HCT116 (cell line): ENCODE measurements at regions of chr4 and their contacts with region 1.

Region 1: DNA sequence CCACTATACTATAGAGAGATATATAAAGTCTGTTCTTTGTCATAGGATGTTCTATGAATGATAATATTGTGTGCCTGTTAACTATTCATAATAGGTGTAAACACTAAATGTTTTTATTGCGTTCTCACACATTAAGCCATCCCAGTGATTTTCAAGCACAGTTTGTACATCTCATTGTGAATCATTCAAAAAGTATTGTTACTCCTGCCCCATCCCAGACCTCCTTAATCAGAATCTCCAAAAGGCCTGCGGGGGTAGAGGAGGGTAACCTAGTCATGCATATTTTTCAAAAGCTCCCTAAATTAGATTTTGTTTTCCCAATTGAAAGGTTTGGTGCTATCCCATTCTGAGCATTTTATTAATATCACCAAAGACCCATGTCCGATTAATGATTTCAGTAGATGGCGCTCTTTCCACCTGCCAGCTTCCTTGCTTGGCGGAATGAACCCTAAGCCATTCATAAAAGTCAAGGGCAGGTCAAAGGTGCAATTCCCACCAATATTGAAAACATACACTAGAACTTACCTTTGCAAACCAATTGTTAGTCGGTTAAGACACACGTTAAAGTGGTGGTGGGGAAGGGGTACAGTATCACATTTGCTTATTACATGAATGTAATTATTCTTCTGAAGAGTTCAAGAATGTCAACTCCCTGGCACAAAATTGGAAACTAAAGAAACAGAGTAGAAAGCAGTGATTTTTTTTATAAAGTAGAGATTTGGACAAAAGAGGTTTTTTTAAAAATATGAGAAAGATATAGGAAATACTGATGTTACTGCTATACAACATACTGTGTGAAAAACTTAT is 5.8 kb upstream of the TET2 start:
- DNase-seq: no peak
- ATAC-seq: peak; percentile 75; the same call in 1 of the 2 replicates
- H3K4me3 ChIP-seq: no peak overlapping the region
- H3K27ac ChIP-seq: no peak overlapping the region
- H3K4me1 ChIP-seq: peaks cover 6 to 11% of the 10 kb centered on the region in 2 experiments; a peak in 3 of 4 replicates
- H3K27me3 ChIP-seq: no peaks in the 10 kb centered on the region
- CTCF ChIP-seq: peak; percentile 63 to 79 (median 67); a peak in 5 of 6 replicates
- POLR2A ChIP-seq: no peak
- RAD21 ChIP-seq: peak; percentile 81

Region 2: DNA sequence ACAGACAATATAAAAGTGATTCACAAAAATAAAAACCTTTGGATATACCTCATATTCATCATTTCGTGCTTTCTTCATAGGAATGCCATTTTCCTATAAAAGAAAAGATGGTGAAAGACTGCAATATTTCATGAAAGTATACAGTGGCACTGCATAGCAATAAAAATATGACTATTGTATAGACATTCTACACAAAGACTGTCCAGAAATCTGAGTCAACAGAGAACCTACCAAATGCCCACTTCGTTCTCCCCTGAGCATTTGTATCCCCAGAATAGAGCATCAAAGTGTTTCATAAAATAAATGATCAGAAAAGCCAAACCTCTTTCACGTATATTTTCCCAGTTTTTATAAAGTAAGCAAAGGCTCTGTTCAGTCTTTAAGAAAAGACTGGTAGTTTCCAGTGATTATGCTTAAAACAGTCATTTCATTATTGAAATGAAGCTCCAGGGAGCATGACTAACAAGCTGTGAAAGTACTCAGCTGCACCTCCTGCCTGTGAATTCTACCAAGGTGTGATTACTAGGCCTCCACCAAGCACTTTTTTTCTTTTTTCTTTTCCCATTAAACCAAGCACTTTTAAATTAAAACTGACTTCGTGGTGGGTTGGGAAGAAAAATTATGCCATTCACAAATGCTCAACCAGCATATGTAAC is 312.8 kb after region 1 on chr4:
- CTCF ChIA-PET with region 1: no interaction called
- POLR2A ChIA-PET with region 1: no interaction called
- RAD21 ChIA-PET with region 1: no interaction called
- intact Hi-C with region 1: loop called (anchors 5 kb)
- DNase-seq: no peak
- ATAC-seq: no peak
- H3K4me3 ChIP-seq: no peak overlapping the region
- H3K27ac ChIP-seq: no peak overlapping the region
- H3K4me1 ChIP-seq: no peaks in the 10 kb centered on the region
- H3K27me3 ChIP-seq: no peaks in the 10 kb centered on the region
- CTCF ChIP-seq: no peak
- POLR2A ChIP-seq: no peak
- RAD21 ChIP-seq: no peak

Region 3: DNA sequence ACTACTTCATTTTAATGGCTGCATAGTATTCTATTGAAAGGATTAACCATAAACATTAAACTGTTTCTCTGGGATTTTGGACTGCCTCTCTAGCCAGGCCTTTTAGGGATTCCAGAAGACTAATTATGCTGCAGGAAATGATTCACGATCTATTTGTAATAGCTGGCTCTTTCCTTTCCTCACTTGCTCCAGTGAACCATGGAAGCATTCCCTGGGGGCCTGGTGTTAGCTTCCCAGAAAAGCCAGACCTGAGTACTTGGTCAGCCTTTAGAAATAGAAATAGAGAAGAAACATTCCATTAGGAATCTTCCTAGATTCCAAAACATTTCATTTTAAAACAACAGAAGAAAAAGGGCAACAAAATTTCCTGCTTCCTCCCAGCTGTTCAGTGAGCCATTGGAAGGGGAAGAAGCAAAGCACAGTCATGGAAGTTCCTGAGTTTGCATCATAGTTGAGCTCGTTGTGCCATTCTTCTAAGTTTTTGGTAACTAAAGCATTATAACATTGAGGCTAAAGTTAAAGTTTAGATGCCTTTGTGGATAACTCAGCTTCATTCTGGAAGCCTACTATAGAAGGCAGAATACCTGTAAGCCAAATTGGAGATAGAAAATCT is 837.9 kb after region 1 on chr4:
- CTCF ChIA-PET with region 1: no interaction called
- POLR2A ChIA-PET with region 1: no interaction called
- RAD21 ChIA-PET with region 1: no interaction called
- intact Hi-C with region 1: no loop called
- DNase-seq: no peak
- ATAC-seq: no peak
- H3K4me3 ChIP-seq: no peak overlapping the region
- H3K27ac ChIP-seq: no peak overlapping the region
- H3K4me1 ChIP-seq: no peaks in the 10 kb centered on the region
- H3K27me3 ChIP-seq: no peaks in the 10 kb centered on the region
- CTCF ChIP-seq: no peak
- POLR2A ChIP-seq: no peak
- RAD21 ChIP-seq: no peak